ENCODE measurements at regions of chr3 and their contacts with region 1.

Region 1: GRCh38 chr3:51311055-51311454 is 74.0 kb upstream of the MANF start:
- DNase-seq: no peak
- H3K4me3 ChIP-seq: no peak overlapping the region
- H3K27ac ChIP-seq: no peak overlapping the region
- H3K4me1 ChIP-seq: no peaks in the 10 kb centered on the region
- H3K27me3 ChIP-seq: no peaks in the 10 kb centered on the region
- CTCF ChIP-seq: peak in 4 of 5 experiments; percentile 18 to 25 (median 22)
- EP300 ChIP-seq: no peak
- POLR2A ChIP-seq: no peak

Region 2: DNA sequence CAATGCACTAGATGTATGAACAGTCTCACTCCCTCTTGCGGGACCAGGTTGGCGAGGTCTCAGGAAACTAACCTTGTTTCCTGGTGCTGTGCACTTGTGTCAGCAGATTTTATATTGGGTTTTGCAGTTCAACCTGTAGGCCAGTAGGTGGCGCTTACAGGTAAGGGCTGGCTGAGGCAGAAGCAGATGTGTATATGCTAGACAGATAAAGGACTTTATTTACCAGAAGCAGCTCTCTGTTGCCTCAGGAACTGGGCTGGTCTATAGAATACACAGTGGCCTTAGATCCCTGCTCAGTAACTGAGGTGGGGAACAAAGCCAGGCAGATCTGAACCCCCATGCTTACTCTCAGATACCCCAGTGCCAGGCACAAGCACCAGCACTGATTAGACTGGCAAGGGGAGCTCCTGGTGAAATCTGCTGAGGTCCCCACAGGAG is 339.5 kb before region 1 on chr3:
- in situ Hi-C with region 1: loop called in 1 of 4 experiments (anchors 25 kb)
- intact Hi-C with region 1: no loop called
- DNase-seq: peak; percentile 34
- H3K4me3 ChIP-seq: no peak overlapping the region
- H3K27ac ChIP-seq: no peak overlapping the region
- H3K4me1 ChIP-seq: peaks cover 0 to 3% (median 0%) of the 10 kb centered on the region in 4 donors
- H3K27me3 ChIP-seq: no peaks in the 10 kb centered on the region
- CTCF ChIP-seq: peak; percentile 67 to 84 (median 77)
- EP300 ChIP-seq: no peak
- POLR2A ChIP-seq: no peak

Region 3: DNA sequence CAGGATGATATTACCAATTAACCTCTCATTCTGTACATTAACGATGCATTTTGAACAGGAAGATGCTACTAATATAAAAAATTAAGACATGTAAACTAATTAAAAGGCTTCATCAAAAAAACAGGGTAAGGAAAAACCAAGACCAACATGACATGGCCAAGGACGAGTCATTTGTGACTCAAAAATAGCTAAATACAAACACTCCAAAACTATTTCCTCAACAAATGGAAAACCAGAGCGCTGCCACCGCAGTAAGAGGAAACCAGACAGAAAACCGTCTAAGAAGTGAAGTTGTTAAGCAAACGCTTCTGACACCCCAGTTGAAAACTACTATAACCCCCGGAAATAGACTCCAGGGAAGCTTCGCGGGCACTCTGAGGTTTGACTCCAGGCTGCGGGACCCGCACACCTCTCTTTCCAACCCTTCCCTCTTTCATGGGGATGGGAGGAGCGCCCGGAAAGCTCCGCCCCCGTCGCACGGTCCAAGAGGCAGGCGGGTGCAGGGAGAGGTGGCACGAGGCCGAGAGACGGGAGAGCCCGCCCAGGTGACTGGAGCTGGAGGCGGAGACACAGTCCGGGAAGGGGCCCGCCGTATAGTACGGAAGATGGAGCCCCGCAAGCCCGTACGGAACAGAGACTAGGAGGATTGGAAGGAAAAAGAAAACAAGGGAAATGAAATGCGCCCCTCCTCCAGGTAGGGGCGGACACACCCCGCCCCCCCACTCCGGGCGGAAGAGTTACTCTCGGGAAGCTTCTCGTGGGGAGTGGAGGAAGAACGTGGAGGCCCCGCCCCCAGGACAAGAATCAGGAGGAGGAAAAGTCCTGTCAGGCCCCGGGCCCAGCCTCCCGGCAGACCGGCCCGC is 188.1 kb after region 1 on chr3:
- in situ Hi-C with region 1: no loop called
- intact Hi-C with region 1: no loop called
- DNase-seq: peak; percentile 96
- H3K4me3 ChIP-seq: peak overlapping the region; percentile 90 to 95 (median 91)
- H3K27ac ChIP-seq: peak overlapping the region; percentile 94 to 99 (median 98)
- H3K4me1 ChIP-seq: peaks cover 0 to 20% (median 8%) of the 10 kb centered on the region in 4 donors
- H3K27me3 ChIP-seq: no peaks in the 10 kb centered on the region
- CTCF ChIP-seq: no peak
- EP300 ChIP-seq: no peak
- POLR2A ChIP-seq: peak; percentile 79